ENCODE measurements at regions of chr20 and their contacts with region 1.

Region 1: DNA sequence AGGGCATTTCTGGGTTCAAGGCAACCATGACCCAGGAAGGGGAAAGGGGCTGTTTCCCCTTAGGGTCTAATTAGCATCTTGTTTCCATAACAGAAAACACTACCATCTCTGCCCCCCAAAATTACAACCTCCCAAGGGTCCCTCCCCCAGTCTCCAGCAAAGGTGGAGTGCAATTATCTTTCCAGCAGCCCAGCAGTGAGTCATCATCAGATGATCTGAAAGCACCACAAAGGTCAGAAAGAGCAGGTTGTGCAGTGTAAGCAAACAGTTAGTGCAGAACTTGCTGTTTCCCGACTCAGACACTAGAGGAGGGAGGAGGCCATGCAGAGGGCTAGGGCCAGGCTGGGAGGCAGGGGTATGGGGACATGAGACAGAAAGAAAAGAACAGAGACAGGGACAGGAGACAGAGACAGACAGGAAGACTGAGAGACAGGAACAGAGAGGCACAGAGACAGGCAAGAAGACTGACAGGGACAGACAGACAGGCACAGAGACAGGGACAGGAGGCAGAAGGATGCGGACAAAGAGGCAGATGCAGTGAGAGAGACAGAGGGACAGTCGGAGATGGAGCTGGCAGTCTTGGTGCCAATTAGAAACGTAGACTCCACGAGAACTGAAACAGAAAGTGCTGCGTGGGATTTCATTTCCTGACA is 62.5 kb downstream of the PYGB start:
- DNase-seq: peak; percentile 99
- ATAC-seq: peak; percentile 96
- H3K4me3 ChIP-seq: peak overlapping the region; percentile 33 to 69 (median 34); a peak in 5 of 6 replicates
- H3K27ac ChIP-seq: peak overlapping the region; percentile 76
- H3K4me1 ChIP-seq: peaks cover 51% of the 10 kb centered on the region
- H3K27me3 ChIP-seq: no peaks in the 10 kb centered on the region
- CTCF ChIP-seq: peak; percentile 97
- EP300 ChIP-seq: peak; percentile 90 to 93
- POLR2A ChIP-seq: no peak
- RAD21 ChIP-seq: peak; percentile 91

Region 2: DNA sequence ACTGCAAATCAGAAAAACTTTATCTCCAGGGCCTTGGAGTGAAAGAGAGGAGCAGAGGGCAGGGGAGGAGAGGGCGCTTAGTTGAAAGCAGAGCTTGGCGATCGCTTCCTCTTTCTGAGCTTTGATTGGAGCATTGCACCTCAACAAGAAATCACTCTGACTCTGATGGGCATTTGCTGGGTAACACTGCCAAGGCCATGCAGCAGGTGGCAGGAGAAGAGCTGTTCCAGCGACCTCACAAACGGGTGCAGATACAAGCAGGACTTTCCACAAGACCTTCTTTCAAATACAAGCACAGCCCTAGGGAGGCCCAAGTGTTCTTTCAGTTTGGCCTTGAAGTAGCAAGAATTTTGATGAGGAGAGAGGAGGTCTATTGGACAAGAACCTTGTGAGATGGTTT is 1105.1 kb before region 1 on chr20:
- CTCF ChIA-PET with region 1: no interaction called
- POLR2A ChIA-PET with region 1: no interaction called
- in situ Hi-C with region 1: no loop called
- intact Hi-C with region 1: no loop called
- DNase-seq: no peak
- ATAC-seq: no peak
- H3K4me3 ChIP-seq: no peak overlapping the region
- H3K27ac ChIP-seq: no peak overlapping the region
- H3K4me1 ChIP-seq: no peaks in the 10 kb centered on the region
- H3K27me3 ChIP-seq: no peaks in the 10 kb centered on the region
- CTCF ChIP-seq: no peak
- EP300 ChIP-seq: no peak
- POLR2A ChIP-seq: no peak
- RAD21 ChIP-seq: no peak

Region 3: DNA sequence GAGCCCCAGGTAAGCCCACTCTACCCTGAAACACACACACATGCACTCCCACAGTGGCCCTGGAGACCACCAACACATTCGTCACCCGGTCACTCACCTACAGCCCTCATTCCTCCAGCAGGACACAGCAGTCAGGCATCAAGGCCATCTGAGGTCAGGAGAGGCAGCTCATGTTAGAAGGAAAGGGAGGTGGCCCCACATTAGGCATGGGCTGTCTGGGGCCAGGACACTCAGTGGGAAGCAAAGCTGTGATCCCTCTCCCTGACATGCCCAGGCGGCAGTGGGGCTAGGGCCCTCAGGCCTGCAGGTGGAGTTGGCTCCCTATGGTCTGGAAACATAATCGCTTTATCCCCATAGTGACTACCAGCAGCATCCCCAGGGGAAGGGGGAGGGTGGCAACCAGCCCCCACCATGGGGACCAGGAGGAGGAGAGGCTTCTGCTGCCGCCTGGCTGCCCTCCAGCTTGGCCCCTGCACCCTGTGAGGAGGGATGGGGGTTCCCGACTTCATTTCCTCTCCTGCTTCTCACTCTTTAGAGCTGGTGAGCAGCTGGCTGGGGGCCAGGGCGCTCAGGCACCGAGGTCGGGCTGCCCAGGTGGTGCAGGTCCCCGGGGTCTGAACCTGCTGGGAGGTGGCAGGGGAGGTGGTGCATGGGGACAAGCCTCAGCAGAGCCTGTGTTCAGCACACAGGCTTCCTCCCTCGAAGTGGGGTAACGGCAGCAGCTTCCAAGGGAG is 437.9 kb before region 1 on chr20:
- CTCF ChIA-PET with region 1: no interaction called
- POLR2A ChIA-PET with region 1: no interaction called
- in situ Hi-C with region 1: no loop called
- intact Hi-C with region 1: no loop called
- DNase-seq: no peak
- ATAC-seq: no peak
- H3K4me3 ChIP-seq: no peak overlapping the region
- H3K27ac ChIP-seq: no peak overlapping the region
- H3K4me1 ChIP-seq: peaks cover 8% of the 10 kb centered on the region
- H3K27me3 ChIP-seq: peaks cover 14 to 25% of the 10 kb centered on the region in 2 experiments; a peak in 2 of 5 replicates
- CTCF ChIP-seq: no peak
- EP300 ChIP-seq: no peak
- POLR2A ChIP-seq: no peak
- RAD21 ChIP-seq: no peak

Region 4: GRCh38 chr20:25299806-25300205 is 10.6 kb before region 1 on chr20:
- CTCF ChIA-PET with region 1: interaction called, 13 read pairs
- POLR2A ChIA-PET with region 1: interaction called, 20 read pairs
- in situ Hi-C with region 1: no loop called
- intact Hi-C with region 1: no loop called
- DNase-seq: no peak
- ATAC-seq: no peak; the same call in 2 of the 3 replicates
- H3K4me3 ChIP-seq: no peak overlapping the region
- H3K27ac ChIP-seq: no peak overlapping the region
- H3K4me1 ChIP-seq: 0 out of 2 replicates have a peak, but pooled peaks cover under 1% of the 10 kb centered on the region
- H3K27me3 ChIP-seq: no peaks in the 10 kb centered on the region
- CTCF ChIP-seq: no peak
- EP300 ChIP-seq: no peak
- POLR2A ChIP-seq: no peak; a peak in 1 of 4 replicates
- RAD21 ChIP-seq: no peak

Region 5: DNA sequence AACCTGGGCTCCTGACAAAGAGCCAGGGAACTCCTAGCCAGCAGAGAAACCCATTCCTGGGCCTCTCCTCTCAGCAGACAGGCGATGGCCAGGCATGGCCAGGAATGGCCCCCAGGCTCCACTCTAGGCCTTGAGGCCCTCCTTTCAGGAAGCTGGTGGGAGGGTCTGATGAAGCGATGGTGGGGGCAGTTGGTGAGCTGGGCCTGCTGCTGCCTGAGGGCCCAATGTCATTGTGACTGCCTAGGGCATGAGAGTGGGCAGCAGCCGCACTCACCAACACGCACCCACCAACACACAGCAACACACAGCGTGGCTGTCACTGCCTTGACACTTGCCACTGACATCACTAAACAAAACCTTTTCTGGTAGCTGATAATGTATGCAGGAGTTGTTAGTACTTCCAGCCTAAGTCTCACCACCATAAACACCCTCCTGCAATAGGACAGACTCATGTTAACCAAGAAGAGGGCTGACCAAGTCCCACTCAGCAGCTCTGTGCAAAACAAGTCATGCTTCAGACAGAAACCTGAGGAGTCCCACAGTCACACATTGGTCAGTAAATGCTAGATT is 11.0 kb after region 1 on chr20:
- CTCF ChIA-PET with region 1: no interaction called
- POLR2A ChIA-PET with region 1: no interaction called
- in situ Hi-C with region 1: no loop called
- intact Hi-C with region 1: no loop called
- DNase-seq: no peak
- ATAC-seq: no peak
- H3K4me3 ChIP-seq: no peak overlapping the region
- H3K27ac ChIP-seq: no peak overlapping the region
- H3K4me1 ChIP-seq: peaks cover 14% of the 10 kb centered on the region
- H3K27me3 ChIP-seq: no peaks in the 10 kb centered on the region
- CTCF ChIP-seq: no peak
- EP300 ChIP-seq: no peak
- POLR2A ChIP-seq: no peak
- RAD21 ChIP-seq: no peak

Region 6: GRCh38 chr20:25378884-25379733 is 68.7 kb after region 1 on chr20:
- CTCF ChIA-PET with region 1: interaction called, 3 read pairs
- POLR2A ChIA-PET with region 1: interaction called, 21 read pairs
- in situ Hi-C with region 1: no loop called
- intact Hi-C with region 1: loop called (anchors 1 kb)
- DNase-seq: no peak
- ATAC-seq: peak; percentile 24
- H3K4me3 ChIP-seq: peak overlapping the region in 1 of 3 experiments; percentile 15; a peak in 1 of 6 replicates
- H3K27ac ChIP-seq: peak overlapping the region; percentile 10
- H3K4me1 ChIP-seq: peaks cover 66% of the 10 kb centered on the region
- H3K27me3 ChIP-seq: no peaks in the 10 kb centered on the region; a peak in 1 of 5 replicates
- CTCF ChIP-seq: no peak
- EP300 ChIP-seq: no peak
- POLR2A ChIP-seq: no peak
- RAD21 ChIP-seq: no peak

Region 7: GRCh38 chr20:25399037-25399430 is 88.6 kb after region 1 on chr20:
- CTCF ChIA-PET with region 1: interaction called, 12 read pairs
- POLR2A ChIA-PET with region 1: interaction called, 16 read pairs
- in situ Hi-C with region 1: no loop called
- intact Hi-C with region 1: loop called (anchors 1 kb)
- DNase-seq: peak; percentile 91
- ATAC-seq: peak; percentile 93
- H3K4me3 ChIP-seq: peak overlapping the region in 1 of 3 experiments; percentile 6; a peak in 1 of 6 replicates
- H3K27ac ChIP-seq: no peak overlapping the region
- H3K4me1 ChIP-seq: peaks cover 51% of the 10 kb centered on the region
- H3K27me3 ChIP-seq: no peaks in the 10 kb centered on the region
- CTCF ChIP-seq: peak; percentile 91
- EP300 ChIP-seq: peak in 1 of 2 experiments; percentile 18; a peak in 1 of 4 replicates
- POLR2A ChIP-seq: no peak
- RAD21 ChIP-seq: peak; percentile 95

Region 8: GRCh38 chr20:25669826-25670422 is 359.5 kb after region 1 on chr20:
- CTCF ChIA-PET with region 1: no interaction called
- POLR2A ChIA-PET with region 1: no interaction called
- in situ Hi-C with region 1: loop called (anchors 25 kb)
- intact Hi-C with region 1: no loop called
- DNase-seq: peak; percentile 61
- ATAC-seq: peak; percentile 91
- H3K4me3 ChIP-seq: no peak overlapping the region
- H3K27ac ChIP-seq: peak overlapping the region; percentile 0
- H3K4me1 ChIP-seq: peaks cover 26% of the 10 kb centered on the region
- H3K27me3 ChIP-seq: no peaks in the 10 kb centered on the region
- CTCF ChIP-seq: peak; percentile 25; the same call in 1 of the 2 replicates
- EP300 ChIP-seq: peak in 1 of 2 experiments; percentile 9; a peak in 1 of 4 replicates
- POLR2A ChIP-seq: no peak
- RAD21 ChIP-seq: peak; percentile 42; the same call in 1 of the 2 replicates